Transverse colon (tissue), 4 donors: ENCODE measurements at regions of chr9 and their contacts with region 1.

Region 1: GRCh38 chr9:129320575-129321263 is 142.7 kb upstream of the IER5L start:
- DNase-seq: peak; percentile 48
- H3K4me3 ChIP-seq: peak overlapping the region; percentile 13 to 37 (median 30)
- H3K27ac ChIP-seq: peak overlapping the region; percentile 73 to 87 (median 80)
- H3K4me1 ChIP-seq: peaks cover 11 to 46% (median 25%) of the 10 kb centered on the region in 4 donors
- H3K27me3 ChIP-seq: peaks cover 4% of the 10 kb centered on the region
- CTCF ChIP-seq: peak in 3 of 5 experiments; percentile 8 to 18 (median 11)
- EP300 ChIP-seq: no peak
- POLR2A ChIP-seq: peak; percentile 54

Region 2: DNA sequence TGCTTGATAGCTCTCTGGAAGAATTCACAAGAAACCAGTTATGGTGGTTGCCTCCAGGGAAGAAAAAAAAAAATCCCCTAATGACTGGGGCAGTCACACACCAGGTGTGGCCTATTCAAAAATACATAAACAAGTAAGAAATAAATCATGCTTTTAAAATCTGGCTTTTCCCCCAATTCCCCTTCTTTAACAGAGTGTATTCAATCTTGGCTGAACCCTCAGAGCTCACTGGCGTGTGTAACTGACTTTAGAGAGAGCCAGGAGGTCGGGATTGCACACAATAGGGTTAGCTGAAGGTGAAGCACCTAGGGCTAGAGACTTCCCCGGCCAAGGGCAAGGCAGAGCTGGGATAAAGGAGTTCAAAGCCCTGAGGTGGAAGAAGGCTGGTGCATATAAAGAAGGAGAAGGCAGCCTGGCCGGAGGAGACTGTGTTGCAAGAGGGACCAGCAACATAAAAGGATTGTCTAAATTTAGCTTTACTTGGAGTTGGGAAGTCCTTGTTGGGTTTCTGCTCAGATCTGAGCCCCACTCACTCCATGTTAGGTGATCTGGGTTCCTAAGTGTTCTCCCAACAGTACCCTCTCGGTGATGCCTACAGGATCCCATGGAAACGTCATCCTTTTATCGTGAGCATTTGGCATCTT is 702.5 kb after region 1 on chr9:
- in situ Hi-C with region 1: no loop called
- intact Hi-C with region 1: loop called (anchors 5 kb)
- DNase-seq: no peak
- H3K4me3 ChIP-seq: no peak overlapping the region
- H3K27ac ChIP-seq: peak overlapping the region; percentile 60 to 76 (median 70)
- H3K4me1 ChIP-seq: peaks cover 14 to 68% (median 37%) of the 10 kb centered on the region in 4 donors
- H3K27me3 ChIP-seq: no peaks in the 10 kb centered on the region
- CTCF ChIP-seq: no peak
- EP300 ChIP-seq: no peak
- POLR2A ChIP-seq: no peak